Esophagus squamous epithelium (tissue), 5 donors: ENCODE measurements at regions of chr4 and their contacts with region 1.

Region 1: DNA sequence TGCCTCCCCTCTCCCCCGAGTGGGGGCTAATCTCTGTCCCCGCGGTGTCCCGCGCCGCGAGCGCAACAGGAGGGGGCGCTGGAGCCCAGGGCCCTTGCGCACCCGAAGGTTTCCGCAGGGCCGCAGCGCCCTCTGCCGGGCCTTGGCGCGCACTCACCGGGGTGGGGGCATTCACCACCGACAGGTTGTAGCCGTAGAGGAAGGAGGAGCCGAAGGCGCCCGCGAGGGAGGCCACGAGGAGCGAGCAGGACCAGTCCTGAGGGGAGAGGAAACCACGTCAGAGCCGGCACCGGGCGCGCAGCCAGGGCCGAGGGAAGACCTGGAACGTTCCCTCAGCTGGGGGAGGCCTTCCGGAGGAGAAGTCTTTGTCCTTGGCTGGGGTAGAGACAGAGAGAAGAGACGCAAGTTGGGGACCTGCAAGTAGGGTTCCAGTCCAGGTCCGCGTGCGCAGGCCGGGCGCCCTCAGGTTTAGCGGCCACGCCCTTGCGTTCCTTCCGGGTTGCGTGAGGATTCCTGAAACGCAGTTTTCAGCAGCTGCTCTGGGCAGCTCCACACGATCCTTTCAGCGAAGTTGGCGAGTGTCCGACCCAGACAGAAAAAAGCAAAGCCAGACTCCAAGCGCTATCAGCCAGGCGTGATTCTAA is 2.4 kb downstream of the SLC2A9 start:
- DNase-seq: peak; percentile 78
- H3K4me3 ChIP-seq: peak overlapping the region; percentile 18 to 67 (median 42)
- H3K27ac ChIP-seq: peak overlapping the region; percentile 84 to 96 (median 88)
- H3K4me1 ChIP-seq: peaks cover 32 to 69% (median 52%) of the 10 kb centered on the region in 3 donors
- H3K27me3 ChIP-seq: no peaks in the 10 kb centered on the region
- CTCF ChIP-seq: peak; percentile 97 to 100 (median 99)
- POLR2A ChIP-seq: peak in 3 of 4 donors; percentile 2 to 63 (median 26)

Region 2: DNA sequence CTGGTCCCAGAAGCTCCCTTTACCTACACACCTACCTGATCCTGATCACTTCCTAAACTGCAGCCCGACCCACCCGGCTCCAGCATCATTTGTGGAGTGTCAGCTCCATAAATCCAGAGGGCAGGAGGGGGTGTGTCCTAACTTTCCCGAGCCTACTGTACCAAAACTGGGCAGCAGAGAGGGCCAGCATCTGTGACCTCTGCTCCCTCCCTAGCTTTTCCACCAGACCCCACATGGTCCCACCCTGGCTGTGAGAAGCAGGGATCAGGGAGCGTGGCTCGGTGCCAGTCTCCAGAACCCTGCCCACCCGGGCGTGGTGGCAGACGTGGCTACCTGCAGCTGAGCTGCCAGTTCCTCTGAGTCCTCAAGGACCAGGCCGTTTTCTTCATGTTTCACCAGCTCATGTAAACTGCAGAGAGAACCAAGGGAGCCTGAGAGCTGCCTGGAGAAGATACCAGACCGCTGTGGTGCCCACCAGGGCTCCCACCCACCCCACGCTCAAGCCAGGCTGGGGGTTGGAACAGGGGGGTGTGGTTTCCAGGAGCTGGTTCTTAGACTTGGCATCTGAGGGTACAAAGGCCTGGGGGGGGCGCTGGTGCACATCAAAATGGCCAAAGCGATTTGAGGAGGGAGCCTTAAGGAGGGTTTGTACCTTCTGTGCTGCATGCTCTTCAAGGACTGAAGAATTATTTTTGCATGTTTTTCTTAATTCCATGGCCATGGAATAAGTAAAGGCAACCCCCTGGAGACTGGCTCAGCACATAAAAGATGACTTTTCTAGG is 314.2 kb before region 1 on chr4:
- intact Hi-C with region 1: loop called (anchors 5 kb)
- DNase-seq: no peak
- H3K4me3 ChIP-seq: no peak overlapping the region
- H3K27ac ChIP-seq: no peak overlapping the region
- H3K4me1 ChIP-seq: peaks cover 0 to 18% (median 0%) of the 10 kb centered on the region in 3 donors
- H3K27me3 ChIP-seq: no peaks in the 10 kb centered on the region
- CTCF ChIP-seq: no peak
- POLR2A ChIP-seq: no peak

Region 3: DNA sequence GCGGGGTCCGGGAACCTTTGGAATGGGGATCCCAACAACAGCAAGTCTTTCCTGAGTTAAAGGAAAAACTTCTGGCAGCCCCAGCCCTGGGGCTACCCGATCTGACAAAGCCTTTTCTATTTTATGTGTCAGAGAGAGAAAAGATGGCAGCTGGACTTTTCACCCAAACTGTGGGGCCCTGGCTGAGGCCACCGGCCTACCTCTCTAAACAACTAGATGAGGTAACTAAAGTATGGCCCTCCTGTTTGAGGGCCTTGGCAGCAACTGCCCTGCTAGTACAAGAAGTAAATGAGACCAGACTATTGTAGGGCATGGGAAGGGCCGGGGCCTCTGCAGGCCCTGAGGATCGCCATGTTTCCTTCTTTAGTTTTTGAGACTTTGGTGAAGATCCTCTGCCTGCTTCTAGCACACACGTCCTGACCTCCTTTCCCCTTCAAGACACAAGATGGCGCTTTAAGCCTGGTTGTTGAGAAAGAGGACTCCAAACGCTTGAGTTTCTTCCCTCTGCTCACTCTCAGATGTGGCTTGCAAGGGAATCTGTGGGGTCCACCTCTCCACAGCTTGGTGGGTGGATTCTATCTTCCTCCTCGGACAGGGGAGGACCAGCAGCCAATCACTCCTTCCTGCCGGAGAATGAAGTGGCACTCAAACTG is 256.0 kb before region 1 on chr4:
- intact Hi-C with region 1: loop called (anchors 5 kb)
- DNase-seq: no peak
- H3K4me3 ChIP-seq: no peak overlapping the region
- H3K27ac ChIP-seq: no peak overlapping the region
- H3K4me1 ChIP-seq: no peaks in the 10 kb centered on the region
- H3K27me3 ChIP-seq: peaks cover 0 to 25% (median 0%) of the 10 kb centered on the region in 4 donors
- CTCF ChIP-seq: peak in 5 of 6 experiments; percentile 52 to 72 (median 64)
- POLR2A ChIP-seq: no peak

Region 4: DNA sequence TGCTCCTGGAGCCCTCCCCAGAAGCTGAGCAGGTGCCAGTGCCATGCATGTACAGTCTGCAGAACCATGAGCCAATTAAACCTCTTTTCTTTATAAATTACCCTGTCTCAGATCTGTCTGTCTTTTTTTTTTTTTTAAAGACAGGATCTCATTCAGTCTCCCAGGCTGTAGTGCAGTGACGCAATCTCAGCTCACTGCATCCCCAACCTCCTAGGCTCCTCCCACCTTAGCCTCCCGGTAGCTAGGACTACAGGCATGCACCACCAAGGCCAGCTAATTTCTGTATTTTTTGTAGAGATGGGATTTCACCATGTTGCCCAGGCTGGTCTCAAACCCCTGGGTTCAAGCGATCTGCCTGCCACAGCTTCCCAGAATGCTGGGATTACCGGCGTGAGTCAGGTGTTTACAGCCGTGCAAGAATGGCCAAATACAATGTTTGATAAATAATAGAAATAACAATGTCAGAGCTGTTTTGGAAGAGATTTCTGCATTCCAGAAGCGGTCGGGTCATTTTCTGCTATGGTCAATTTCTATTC is 66.5 kb before region 1 on chr4:
- intact Hi-C with region 1: no loop called
- DNase-seq: no peak
- H3K4me3 ChIP-seq: no peak overlapping the region
- H3K27ac ChIP-seq: no peak overlapping the region
- H3K4me1 ChIP-seq: no peaks in the 10 kb centered on the region
- H3K27me3 ChIP-seq: no peaks in the 10 kb centered on the region
- CTCF ChIP-seq: no peak
- POLR2A ChIP-seq: no peak

Region 5: DNA sequence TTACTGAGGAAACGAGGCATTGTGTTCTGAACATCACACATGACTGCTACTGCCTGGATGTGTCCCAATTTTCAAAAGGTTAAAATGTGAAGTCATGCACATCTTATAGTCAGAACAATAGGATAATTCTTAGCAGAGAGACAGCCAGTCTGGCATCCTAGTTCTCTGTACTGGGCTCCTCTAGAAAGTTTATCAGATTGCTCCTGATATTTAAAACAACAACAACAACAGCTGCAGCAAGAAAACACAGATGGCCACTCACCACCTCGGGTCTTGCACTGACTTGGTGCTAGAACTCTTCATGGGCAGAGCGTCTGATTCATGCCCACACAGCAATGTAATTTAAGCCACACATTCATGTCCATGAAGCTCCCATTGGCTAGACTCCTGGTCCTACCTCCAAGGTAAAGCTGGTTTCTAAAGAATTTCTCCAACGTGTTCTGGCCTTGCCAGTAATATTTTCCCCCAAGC is 35.7 kb after region 1 on chr4:
- intact Hi-C with region 1: loop called (anchors 5 kb)
- DNase-seq: no peak
- H3K4me3 ChIP-seq: no peak overlapping the region
- H3K27ac ChIP-seq: peak overlapping the region in 1 of 4 donors; percentile 28
- H3K4me1 ChIP-seq: peaks cover 2 to 52% (median 21%) of the 10 kb centered on the region in 3 donors
- H3K27me3 ChIP-seq: no peaks in the 10 kb centered on the region
- CTCF ChIP-seq: no peak
- POLR2A ChIP-seq: no peak